ENCODE measurements at regions of chr6 and their contacts with region 1.

Region 1: GRCh38 chr6:44593539-44593944 is 206.0 kb downstream of the CDC5L start:
- DNase-seq: no peak
- H3K4me3 ChIP-seq: no peak overlapping the region
- CTCF ChIP-seq: peak; percentile 51

Region 2: GRCh38 chr6:44571510-44571909 is 22.0 kb before region 1 on chr6:
- CTCF ChIA-PET with region 1: interaction called, 10 read pairs
- POLR2A ChIA-PET with region 1: no interaction called
- DNase-seq: no peak
- H3K4me3 ChIP-seq: no peak overlapping the region
- CTCF ChIP-seq: no peak

Region 3: DNA sequence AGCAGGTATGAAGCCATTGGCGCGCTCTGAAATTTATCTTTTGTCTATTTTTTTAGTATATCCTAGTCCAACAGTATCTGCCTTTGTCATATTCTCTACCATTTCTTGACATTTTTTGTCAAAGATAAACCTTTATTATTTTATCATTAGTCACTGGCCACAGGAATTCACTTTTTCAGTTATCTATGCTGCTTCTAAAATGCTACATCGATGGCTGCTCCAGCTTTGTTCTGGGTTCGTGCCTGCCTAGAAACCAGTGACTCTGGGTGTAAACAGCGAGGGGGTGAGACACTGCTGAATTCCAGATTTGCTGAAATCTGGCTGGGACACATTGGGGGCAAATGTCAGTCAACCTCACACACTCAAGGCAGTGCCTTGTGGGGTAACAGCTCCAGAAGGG is 12.6 kb before region 1 on chr6:
- CTCF ChIA-PET with region 1: interaction called, 11 read pairs
- POLR2A ChIA-PET with region 1: no interaction called
- DNase-seq: peak; percentile 42
- H3K4me3 ChIP-seq: no peak overlapping the region
- CTCF ChIP-seq: no peak